Sigmoid colon (tissue), 7 donors: ENCODE measurements at regions of chr11 and their contacts with region 1.

Region 1: DNA sequence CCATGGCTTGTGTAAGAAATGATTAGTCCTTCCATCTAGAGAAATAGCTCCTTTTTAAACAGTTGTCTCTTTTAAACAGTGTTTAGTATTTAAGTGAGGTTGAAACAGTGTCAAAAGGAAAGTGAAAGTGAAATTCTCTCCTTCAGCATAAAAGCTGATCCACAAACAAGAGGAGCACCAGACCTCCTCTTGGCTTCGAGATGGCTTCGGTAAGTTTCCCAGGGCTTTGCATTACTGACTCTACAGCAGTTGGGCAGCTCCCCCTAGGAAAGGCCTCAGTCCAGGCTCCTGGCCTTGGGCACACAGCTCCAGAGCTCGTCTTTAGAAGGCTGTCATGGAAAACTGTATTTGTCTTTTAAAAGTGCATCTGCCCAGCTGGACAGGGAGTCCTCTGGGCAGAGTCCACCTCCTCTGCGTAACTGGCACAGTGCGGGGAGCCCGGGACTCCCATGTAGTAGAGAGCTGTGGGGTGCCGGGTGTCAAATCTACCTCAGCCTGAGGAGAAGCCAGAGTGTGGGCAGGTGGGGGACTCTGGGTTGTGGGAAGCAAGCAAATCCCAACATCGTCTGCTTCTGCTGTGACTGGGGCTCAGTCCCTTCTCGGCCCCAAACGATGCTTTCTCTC is at the start of gene PLAAT4:
- DNase-seq: peak; percentile 78
- H3K4me3 ChIP-seq: peak within 1 kb of the TSS; percentile 31 to 52 (median 48)
- H3K27ac ChIP-seq: peak within 1 kb of the TSS; percentile 90 to 97 (median 92)
- H3K4me1 ChIP-seq: peaks cover 0 to 30% (median 26%) of the 10 kb centered on the region in 4 donors
- H3K27me3 ChIP-seq: no peaks in the 10 kb centered on the region
- CTCF ChIP-seq: no peak
- EP300 ChIP-seq: no peak
- POLR2A ChIP-seq: no peak
- total RNA-seq, gene PLAAT4: 36.7 to 49.9 (median 42.8) TPM

Region 2: DNA sequence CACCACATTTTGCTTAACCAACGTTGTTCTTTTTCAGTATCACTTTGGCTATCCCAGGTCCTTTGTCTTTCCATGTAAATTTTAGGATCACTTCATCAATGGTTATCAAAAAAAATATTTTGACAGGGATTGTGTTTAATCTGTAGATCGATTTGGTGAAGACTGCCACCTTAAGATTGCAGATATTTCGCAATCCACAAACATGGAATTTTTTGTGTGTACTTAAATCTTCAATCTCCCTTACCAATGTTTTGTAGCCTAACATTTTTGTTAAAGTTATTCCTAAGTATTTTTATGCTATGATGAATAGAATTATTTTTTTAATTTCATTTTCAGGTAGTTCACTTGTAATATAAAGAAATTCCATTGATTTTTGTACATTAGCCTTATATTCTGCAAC is 64.4 kb before region 1 on chr11:
- intact Hi-C with region 1: no loop called
- DNase-seq: no peak
- H3K4me3 ChIP-seq: no peak overlapping the region
- H3K27ac ChIP-seq: no peak overlapping the region
- H3K4me1 ChIP-seq: no peaks in the 10 kb centered on the region
- H3K27me3 ChIP-seq: no peaks in the 10 kb centered on the region
- CTCF ChIP-seq: no peak
- EP300 ChIP-seq: no peak
- POLR2A ChIP-seq: no peak

Region 3: DNA sequence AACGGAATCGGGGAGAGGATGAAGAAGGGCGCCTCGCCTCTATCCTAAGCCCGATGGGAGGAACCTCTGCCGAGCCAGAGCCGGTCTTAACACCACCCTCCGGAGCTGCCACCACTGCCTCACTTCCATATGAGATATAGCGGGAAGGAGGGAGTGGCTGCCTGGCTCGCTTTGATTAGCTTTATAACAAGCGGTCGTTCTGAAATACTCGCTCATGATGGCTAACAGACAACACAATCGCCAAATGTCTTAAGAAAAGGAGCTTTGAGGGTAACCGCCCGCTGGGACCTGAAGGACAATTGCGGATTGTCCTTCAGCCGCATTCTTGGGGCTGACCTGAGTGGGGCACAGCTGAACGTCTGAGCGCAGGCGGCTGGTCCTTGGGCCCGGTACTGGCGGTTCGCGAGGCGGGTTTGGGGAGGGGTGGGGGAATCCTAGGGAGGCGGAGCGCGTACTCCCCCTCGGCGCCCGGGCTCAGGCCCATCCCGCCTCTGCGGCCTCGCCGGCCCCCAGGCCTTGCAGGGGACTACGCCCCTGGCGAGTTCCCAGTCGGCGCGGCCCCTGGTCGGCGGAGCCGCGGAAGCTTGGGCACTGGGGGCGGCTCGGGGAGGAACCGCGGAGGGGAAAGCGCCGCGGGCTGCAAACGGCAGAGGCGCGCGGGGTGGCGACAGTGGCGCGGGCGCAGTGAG is 46.1 kb before region 1 on chr11 and contains the start of gene PLAAT5:
- intact Hi-C with region 1: loop called (anchors 1 kb)
- DNase-seq: peak; percentile 76
- H3K4me3 ChIP-seq: peak within 1 kb of the TSS; percentile 54 to 65 (median 57)
- H3K27ac ChIP-seq: peak within 1 kb of the TSS; percentile 76 to 86 (median 82)
- H3K4me1 ChIP-seq: peaks cover 0 to 31% (median 18%) of the 10 kb centered on the region in 4 donors
- H3K27me3 ChIP-seq: no peaks in the 10 kb centered on the region
- CTCF ChIP-seq: no peak
- EP300 ChIP-seq: no peak
- POLR2A ChIP-seq: no peak
- total RNA-seq, gene PLAAT5: 2.0 to 8.4 (median 3.2) TPM

Region 4: DNA sequence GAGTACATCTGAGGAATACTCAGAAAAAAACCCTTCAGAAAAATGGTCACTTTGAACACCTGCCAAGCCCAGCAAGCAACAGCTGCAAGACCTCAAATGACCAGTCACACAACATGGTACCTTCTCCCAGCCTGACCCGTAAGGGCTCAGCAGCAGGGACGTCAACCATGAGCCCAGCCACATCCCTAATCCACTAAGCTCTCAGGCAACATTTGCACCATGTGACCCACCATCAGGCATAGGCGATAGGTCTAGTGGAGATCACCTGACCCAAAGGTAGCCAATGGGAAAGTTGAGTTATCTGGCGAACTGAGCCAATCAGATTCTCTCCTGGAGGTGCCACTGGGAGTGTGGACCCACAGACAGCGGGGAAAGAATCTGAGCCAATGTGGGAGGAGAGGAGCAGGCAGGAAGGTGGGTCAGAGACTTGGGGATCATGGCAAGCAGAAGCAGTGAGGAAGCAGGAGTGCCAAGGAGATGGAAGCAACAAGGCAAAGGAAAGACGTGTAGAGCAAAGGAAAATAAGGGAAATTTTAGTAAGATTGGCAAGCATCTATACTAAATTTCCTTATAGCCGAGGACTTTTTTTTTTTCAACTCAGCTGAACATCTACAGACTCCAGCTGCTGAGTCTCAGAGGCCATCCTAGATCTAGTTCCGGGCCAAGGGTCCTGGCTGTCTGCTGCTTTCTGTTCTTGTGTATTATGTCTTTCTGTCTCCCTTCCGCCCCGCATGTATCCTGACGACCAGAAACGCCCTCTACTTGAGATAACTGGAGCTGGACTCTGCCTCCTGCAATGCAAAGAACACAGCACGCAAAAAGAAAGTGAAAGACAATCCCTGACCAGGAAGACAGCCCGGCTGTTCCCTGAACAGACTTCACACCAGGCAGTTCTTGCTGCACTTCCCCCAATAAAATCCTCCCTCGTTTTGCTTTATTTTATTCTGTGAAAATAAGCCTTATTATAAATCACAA is 37.4 kb after region 1 on chr11:
- intact Hi-C with region 1: loop called (anchors 2 kb)
- DNase-seq: peak; percentile 80
- H3K4me3 ChIP-seq: peak overlapping the region; percentile 16 to 41 (median 35)
- H3K27ac ChIP-seq: peak overlapping the region; percentile 77 to 85 (median 80)
- H3K4me1 ChIP-seq: peaks cover 0 to 23% (median 15%) of the 10 kb centered on the region in 4 donors
- H3K27me3 ChIP-seq: no peaks in the 10 kb centered on the region
- CTCF ChIP-seq: no peak
- EP300 ChIP-seq: no peak
- POLR2A ChIP-seq: no peak

Region 5: DNA sequence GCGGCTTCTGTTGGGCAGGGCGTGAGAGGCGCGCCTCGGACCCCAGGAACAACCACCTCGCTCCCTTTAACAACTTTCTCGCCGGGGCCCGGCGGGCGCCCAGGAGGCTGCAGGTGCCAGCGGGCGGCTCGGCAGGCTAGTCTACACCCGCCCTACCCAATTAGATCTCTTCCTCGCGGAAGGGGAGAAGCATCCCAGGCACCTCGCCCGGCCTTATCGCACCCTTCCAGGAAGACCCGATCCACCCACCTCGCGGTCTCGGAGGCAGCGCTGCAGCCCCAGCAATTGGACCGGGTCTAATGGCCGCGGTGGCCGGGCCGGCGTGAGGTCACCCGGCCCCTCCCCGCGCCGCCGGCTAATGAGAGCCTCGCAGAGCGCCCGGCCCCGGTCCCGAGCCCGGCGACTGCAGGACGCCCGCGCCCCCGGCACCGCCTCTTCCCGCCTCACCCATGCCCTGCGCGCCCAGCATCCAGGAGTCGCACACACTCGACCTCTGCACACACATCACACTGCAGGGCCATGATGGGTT is 77.4 kb after region 1 on chr11 and contains the start of gene PLAAT3:
- intact Hi-C with region 1: loop called (anchors 2 kb)
- DNase-seq: peak; percentile 87
- H3K4me3 ChIP-seq: peak within 1 kb of the TSS; percentile 57 to 81 (median 71)
- H3K27ac ChIP-seq: peak within 1 kb of the TSS; percentile 79 to 85 (median 84)
- H3K4me1 ChIP-seq: peaks cover 0 to 42% (median 38%) of the 10 kb centered on the region in 4 donors
- H3K27me3 ChIP-seq: no peaks in the 10 kb centered on the region
- CTCF ChIP-seq: no peak
- EP300 ChIP-seq: no peak
- POLR2A ChIP-seq: peak in 1 of 2 donors; percentile 40
- total RNA-seq, gene PLAAT3: 34.9 to 59.9 (median 47.9) TPM